ENCODE measurements at regions of chr19 and their contacts with region 1.

Region 1: GRCh38 chr19:8697671-8698432 is 743 bp downstream of the ACTL9 start:
- DNase-seq: peak; percentile 41
- ATAC-seq: no peak
- H3K4me3 Mint-ChIP-seq: no peak overlapping the region
- H3K27ac Mint-ChIP-seq: no peak overlapping the region
- H3K4me1 Mint-ChIP-seq: peaks cover 23% of the 10 kb centered on the region
- H3K27me3 Mint-ChIP-seq: peaks cover 8% of the 10 kb centered on the region
- CTCF ChIP-seq: peak; percentile 66

Region 2: GRCh38 chr19:8654591-8655339 is 43.1 kb before region 1 on chr19:
- CTCF ChIA-PET with region 1: interaction called, 93 read pairs
- POLR2A ChIA-PET with region 1: interaction called, 6 read pairs
- intact Hi-C with region 1: loop called (anchors 2 kb)
- DNase-seq: peak; percentile 77
- ATAC-seq: peak; percentile 86
- H3K4me3 Mint-ChIP-seq: no peak overlapping the region
- H3K27ac Mint-ChIP-seq: no peak overlapping the region
- H3K4me1 Mint-ChIP-seq: peaks cover 17% of the 10 kb centered on the region
- H3K27me3 Mint-ChIP-seq: no peaks in the 10 kb centered on the region
- CTCF ChIP-seq: peak; percentile 98

Region 3: DNA sequence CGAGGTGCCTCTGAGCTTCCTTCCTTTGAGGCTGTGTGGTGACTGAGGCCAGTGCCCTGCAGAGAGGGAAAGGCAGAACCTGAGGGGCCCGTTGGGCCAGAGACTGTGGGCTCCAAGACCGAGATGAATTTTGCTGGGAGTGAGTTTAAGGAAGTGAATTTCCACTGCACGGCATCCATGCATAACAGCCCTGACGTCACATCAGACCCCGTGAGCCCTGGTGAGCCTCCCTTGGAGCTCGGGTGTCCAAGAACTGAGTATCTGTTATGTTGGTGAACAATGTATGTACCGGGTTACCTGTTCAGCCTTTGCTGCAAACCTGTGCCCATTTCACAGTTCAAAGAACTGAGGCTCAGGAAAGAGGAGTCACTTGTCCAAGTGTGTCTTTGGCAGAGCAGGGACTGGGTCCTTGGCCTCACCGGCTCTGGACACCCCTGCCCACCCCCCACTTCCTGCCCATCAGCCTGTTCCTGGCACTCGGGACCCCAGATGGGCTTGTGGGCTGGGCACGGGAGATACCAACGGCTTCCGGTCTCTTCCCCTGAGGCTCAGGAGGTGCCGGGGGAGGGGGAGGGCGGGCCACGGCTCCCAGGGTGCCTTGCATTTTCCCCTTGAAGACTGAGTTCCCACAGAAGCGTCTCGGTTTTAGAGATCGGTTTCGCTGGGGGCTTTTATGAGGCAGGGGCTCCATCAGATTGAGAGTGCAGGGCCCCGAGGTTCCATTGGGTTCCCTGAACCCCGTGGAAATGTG is 33.8 kb before region 1 on chr19:
- CTCF ChIA-PET with region 1: interaction called, 18 read pairs
- POLR2A ChIA-PET with region 1: no interaction called
- intact Hi-C with region 1: no loop called
- DNase-seq: peak; percentile 70
- ATAC-seq: peak; percentile 44
- H3K4me3 Mint-ChIP-seq: no peak overlapping the region
- H3K27ac Mint-ChIP-seq: peak overlapping the region; percentile 52
- H3K4me1 Mint-ChIP-seq: peaks cover 38% of the 10 kb centered on the region
- H3K27me3 Mint-ChIP-seq: no peaks in the 10 kb centered on the region
- CTCF ChIP-seq: no peak

Region 4: DNA sequence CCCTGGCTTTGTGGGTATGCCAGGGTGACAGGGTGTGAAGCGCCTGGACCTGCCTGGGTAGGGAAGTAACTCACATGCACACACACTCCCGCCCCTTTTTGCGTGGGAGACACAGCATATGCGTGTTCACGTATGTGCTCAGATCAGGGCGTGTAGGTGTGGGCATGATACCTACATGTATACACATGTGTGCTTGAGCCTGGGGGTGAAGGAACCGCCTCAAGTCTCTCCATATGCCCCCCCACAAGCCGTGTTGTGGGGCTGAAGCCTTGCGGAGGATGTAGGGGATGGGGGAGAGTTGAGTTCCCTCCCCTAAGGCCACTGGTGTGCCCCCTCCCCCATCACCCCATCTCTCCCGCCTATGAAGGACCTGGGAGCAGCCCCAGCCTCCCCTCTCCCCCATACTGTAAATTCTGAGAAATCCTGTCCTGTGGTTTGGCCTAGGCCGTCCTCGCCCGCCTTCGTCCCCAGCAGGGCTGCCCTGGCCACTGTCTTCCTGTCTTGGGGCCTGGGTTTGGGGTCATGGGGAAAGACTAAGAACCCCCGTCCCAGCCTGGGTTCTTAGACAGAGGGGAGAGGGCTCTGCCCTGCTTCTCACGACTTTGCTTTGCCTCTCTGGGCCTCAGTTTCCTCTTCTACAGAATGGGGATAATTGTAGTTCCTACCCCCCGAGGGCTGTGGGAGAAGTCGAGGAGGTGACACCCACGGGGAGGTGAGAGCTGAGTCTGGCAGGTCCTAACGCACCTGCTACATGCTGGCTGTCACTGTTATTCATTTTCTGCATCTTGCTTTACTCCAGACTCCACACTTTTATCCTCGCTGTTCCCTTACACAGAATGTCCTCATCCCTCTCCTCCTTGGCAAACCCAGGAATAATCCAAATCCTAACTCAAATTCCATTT is 13.6 kb before region 1 on chr19:
- CTCF ChIA-PET with region 1: interaction called, 13 read pairs
- POLR2A ChIA-PET with region 1: no interaction called
- intact Hi-C with region 1: no loop called
- DNase-seq: no peak
- ATAC-seq: no peak
- H3K4me3 Mint-ChIP-seq: no peak overlapping the region
- H3K27ac Mint-ChIP-seq: no peak overlapping the region
- H3K4me1 Mint-ChIP-seq: peaks cover 13% of the 10 kb centered on the region
- H3K27me3 Mint-ChIP-seq: no peaks in the 10 kb centered on the region
- CTCF ChIP-seq: no peak

Region 5: DNA sequence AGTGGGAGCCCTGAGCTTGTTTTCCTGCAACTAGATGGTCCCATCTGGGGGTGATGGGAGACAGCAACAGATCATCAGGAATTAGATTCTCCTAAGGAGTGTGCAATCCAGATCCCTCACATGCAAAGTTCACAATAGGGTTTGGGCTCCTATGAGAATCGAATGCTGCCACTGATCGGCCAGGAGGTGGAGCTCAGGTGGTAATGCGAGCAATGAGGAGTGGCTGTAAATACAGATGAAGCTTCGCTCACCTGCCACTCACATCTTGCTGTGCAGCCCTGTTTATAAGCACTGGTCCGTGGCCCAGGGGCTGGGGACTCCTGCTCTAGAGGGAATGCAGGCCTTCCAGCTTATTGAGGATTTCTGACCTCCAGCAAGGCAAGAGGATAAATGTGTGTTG is 128.5 kb after region 1 on chr19:
- CTCF ChIA-PET with region 1: no interaction called
- POLR2A ChIA-PET with region 1: no interaction called
- intact Hi-C with region 1: no loop called
- DNase-seq: no peak
- ATAC-seq: no peak
- H3K4me3 Mint-ChIP-seq: no peak overlapping the region
- H3K27ac Mint-ChIP-seq: no peak overlapping the region
- H3K4me1 Mint-ChIP-seq: peaks cover 16% of the 10 kb centered on the region
- H3K27me3 Mint-ChIP-seq: no peaks in the 10 kb centered on the region
- CTCF ChIP-seq: no peak